WTC11 (cell line): ENCODE measurements at regions of chr16 and their contacts with region 1.

Region 1: GRCh38 chr16:3129137-3130131 is 5.4 kb upstream of the ZNF213 start:
- DNase-seq: peak; percentile 69
- ATAC-seq: peak; percentile 58
- H3K4me3 Mint-ChIP-seq: peak overlapping the region; percentile 45
- H3K27ac Mint-ChIP-seq: peak overlapping the region; percentile 95
- H3K4me1 Mint-ChIP-seq: peaks cover 42% of the 10 kb centered on the region
- H3K27me3 Mint-ChIP-seq: no peaks in the 10 kb centered on the region
- CTCF ChIP-seq: peak; percentile 87

Region 2: GRCh38 chr16:3080024-3080423 is 49.4 kb before region 1 on chr16:
- CTCF ChIA-PET with region 1: interaction called, 18 read pairs
- POLR2A ChIA-PET with region 1: no interaction called
- DNase-seq: no peak
- ATAC-seq: no peak
- H3K4me3 Mint-ChIP-seq: no peak overlapping the region
- H3K27ac Mint-ChIP-seq: no peak overlapping the region; the same call in 1 of the 2 replicates
- H3K4me1 Mint-ChIP-seq: peaks cover 40% of the 10 kb centered on the region
- H3K27me3 Mint-ChIP-seq: no peaks in the 10 kb centered on the region
- CTCF ChIP-seq: no peak

Region 3: DNA sequence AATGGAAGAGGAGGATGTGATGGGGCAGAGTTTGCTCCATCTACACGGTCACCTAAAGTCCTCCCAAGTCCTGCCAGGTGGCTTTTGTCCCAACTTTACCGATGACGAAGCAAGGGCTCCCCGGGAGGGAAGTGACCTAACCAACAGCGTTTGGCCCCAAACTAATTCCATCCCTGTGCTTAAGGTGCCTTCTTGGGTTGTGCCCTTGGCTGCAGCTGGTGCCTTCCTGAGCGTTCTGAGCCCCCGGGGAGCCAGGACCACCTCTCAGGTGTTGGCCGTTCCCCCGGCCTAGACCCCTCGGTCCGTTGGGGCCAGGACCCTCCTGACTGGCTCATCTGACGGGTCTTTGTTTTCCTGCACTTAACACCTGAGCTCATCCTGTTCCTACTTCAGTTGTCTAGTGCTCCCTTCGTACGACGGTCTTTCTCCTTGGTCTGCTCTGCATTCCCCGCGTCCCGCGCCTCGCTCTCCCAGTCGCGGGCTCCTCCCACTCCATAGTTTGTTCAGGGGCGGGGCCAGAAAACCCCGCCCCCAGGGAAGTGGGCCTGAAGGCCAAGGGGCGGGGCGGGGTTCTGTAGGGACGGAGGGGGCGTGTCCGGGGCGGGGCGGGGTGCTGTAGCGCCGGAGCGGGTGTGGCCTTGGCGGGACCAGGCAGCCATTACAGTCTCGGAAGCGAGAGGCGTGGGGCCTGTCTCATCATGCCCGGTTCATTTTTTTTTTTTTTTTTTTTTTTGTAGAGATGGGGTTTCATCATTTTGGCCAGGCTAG is 29.5 kb before region 1 on chr16:
- CTCF ChIA-PET with region 1: interaction called, 60 read pairs
- POLR2A ChIA-PET with region 1: interaction called, 14 read pairs
- DNase-seq: peak; percentile 95
- ATAC-seq: peak; percentile 42
- H3K4me3 Mint-ChIP-seq: peak overlapping the region; percentile 93
- H3K27ac Mint-ChIP-seq: peak overlapping the region; percentile 99
- H3K4me1 Mint-ChIP-seq: peaks cover 61% of the 10 kb centered on the region
- H3K27me3 Mint-ChIP-seq: no peaks in the 10 kb centered on the region; the same call in 1 of the 2 replicates
- CTCF ChIP-seq: no peak

Region 4: GRCh38 chr16:3143612-3144320 is 14.3 kb after region 1 on chr16:
- CTCF ChIA-PET with region 1: interaction called, 54 read pairs
- POLR2A ChIA-PET with region 1: interaction called, 6 read pairs
- DNase-seq: no peak
- ATAC-seq: no peak
- H3K4me3 Mint-ChIP-seq: no peak overlapping the region
- H3K27ac Mint-ChIP-seq: no peak overlapping the region; the same call in 1 of the 2 replicates
- H3K4me1 Mint-ChIP-seq: no peaks in the 10 kb centered on the region
- H3K27me3 Mint-ChIP-seq: peaks cover 11% of the 10 kb centered on the region
- CTCF ChIP-seq: no peak

Region 5: GRCh38 chr16:3165111-3165822 is 35.8 kb after region 1 on chr16:
- CTCF ChIA-PET with region 1: interaction called, 86 read pairs
- POLR2A ChIA-PET with region 1: interaction called, 4 read pairs
- DNase-seq: no peak
- ATAC-seq: no peak
- H3K4me3 Mint-ChIP-seq: no peak overlapping the region
- H3K27ac Mint-ChIP-seq: no peak overlapping the region
- H3K4me1 Mint-ChIP-seq: peaks cover 7% of the 10 kb centered on the region
- H3K27me3 Mint-ChIP-seq: peaks cover 36% of the 10 kb centered on the region
- CTCF ChIP-seq: no peak

Region 6: DNA sequence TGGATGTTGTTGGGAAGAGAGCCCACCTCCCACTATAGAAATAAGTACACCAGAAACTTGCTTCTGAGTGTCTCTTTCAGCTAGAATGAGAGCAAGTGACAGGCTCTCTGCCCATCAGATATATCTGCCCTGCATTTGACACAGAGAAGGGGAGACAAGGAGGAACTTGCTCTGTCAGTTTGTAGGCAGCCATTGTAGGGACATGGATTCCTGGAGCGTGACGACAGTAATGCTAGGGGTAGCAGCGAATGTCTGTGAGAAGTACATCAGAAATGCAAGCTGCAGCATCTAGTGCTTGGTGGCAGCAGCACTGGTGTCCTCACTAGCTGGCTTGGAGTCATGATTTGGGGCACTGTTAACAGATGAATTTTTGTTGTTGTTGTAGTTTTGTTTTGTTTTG is 82.6 kb after region 1 on chr16:
- CTCF ChIA-PET with region 1: no interaction called
- POLR2A ChIA-PET with region 1: no interaction called
- DNase-seq: no peak
- ATAC-seq: no peak
- H3K4me3 Mint-ChIP-seq: no peak overlapping the region
- H3K27ac Mint-ChIP-seq: no peak overlapping the region
- H3K4me1 Mint-ChIP-seq: no peaks in the 10 kb centered on the region
- H3K27me3 Mint-ChIP-seq: peaks cover 51% of the 10 kb centered on the region
- CTCF ChIP-seq: no peak